ENCODE measurements at regions of chr1 and their contacts with region 1.

Region 1: GRCh38 chr1:51897699-51898031 is 19.1 kb upstream of the NRDC start:
- DNase-seq: no peak
- H3K4me3 ChIP-seq: no peak overlapping the region
- H3K4me3 Mint-ChIP-seq: peak overlapping the region in 1 of 2 donors; percentile 40
- H3K27ac ChIP-seq: no peak overlapping the region
- H3K27ac Mint-ChIP-seq: no peak overlapping the region
- H3K4me1 ChIP-seq: no peaks in the 10 kb centered on the region
- H3K4me1 Mint-ChIP-seq: peaks cover 2% of the 10 kb centered on the region
- H3K27me3 ChIP-seq: peaks cover 9 to 11% of the 10 kb centered on the region in 2 donors
- H3K27me3 Mint-ChIP-seq: peaks cover 28 to 33% (median 30%) of the 10 kb centered on the region in 3 donors
- CTCF ChIP-seq: no peak

Region 2: GRCh38 chr1:51916587-51917405 is 19.1 kb after region 1 on chr1:
- intact Hi-C with region 1: no loop called
- DNase-seq: no peak
- H3K4me3 ChIP-seq: no peak overlapping the region
- H3K4me3 Mint-ChIP-seq: no peak overlapping the region
- H3K27ac ChIP-seq: no peak overlapping the region
- H3K27ac Mint-ChIP-seq: no peak overlapping the region
- H3K4me1 ChIP-seq: no peaks in the 10 kb centered on the region
- H3K4me1 Mint-ChIP-seq: no peaks in the 10 kb centered on the region
- H3K27me3 ChIP-seq: peaks cover 0 to 2% of the 10 kb centered on the region in 2 donors
- H3K27me3 Mint-ChIP-seq: peaks cover 7 to 29% (median 15%) of the 10 kb centered on the region in 3 donors
- CTCF ChIP-seq: no peak

Region 3: DNA sequence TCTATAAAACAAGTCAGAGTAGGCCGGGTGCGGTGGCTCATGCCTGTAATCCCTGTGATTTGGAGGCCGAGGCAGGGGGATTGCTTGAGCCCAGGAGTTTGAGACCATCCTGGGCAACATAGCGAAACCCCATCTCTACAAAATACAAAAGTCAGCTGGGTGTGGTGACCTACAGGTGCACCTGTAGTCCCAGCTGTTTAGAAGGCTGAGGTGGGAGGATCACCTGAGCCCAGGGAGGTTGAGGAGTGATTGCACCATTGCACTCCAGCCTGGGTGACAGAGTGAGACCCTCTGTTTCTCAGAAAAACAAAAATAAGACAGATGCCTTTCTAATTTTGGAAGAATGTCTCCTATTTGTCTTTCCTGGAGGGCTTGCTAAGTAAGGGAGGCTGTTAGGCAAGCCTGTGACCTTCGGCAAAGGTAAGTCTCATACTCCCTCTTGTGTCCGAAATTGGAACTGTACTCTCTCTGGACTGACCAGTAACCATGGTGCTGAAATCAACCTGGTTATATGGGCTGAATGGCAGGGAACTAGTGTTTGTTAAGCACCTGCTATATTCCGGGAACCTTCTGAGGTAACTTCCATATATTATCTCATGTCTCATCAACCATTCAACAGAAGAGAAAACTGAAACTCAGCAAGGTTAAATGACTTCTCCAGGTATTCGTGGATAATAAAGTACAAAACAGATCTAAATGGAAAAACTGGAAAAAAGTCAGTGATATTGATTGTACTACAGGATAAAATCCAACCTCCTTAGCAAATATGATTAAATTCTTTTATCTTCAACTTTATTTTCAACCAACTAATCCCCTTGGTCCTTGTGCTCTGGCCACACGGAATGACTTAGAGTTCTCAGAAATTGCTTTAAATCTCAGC is 104.6 kb after region 1 on chr1:
- intact Hi-C with region 1: loop called in 1 of 2 experiments (anchors 2 kb)
- DNase-seq: peak; percentile 45 to 73 (median 64)
- H3K4me3 ChIP-seq: no peak overlapping the region
- H3K4me3 Mint-ChIP-seq: no peak overlapping the region
- H3K27ac ChIP-seq: no peak overlapping the region
- H3K27ac Mint-ChIP-seq: no peak overlapping the region
- H3K4me1 ChIP-seq: no peaks in the 10 kb centered on the region
- H3K4me1 Mint-ChIP-seq: no peaks in the 10 kb centered on the region
- H3K27me3 ChIP-seq: peaks cover 8 to 9% of the 10 kb centered on the region in 2 donors
- H3K27me3 Mint-ChIP-seq: peaks cover 23 to 27% (median 24%) of the 10 kb centered on the region in 3 donors
- CTCF ChIP-seq: peak; percentile 96

Region 4: GRCh38 chr1:52007215-52008002 is 109.7 kb after region 1 on chr1:
- intact Hi-C with region 1: loop called (anchors 2 to 10 kb)
- DNase-seq: no peak
- H3K4me3 ChIP-seq: no peak overlapping the region
- H3K4me3 Mint-ChIP-seq: peak overlapping the region in 1 of 2 donors; percentile 28
- H3K27ac ChIP-seq: no peak overlapping the region
- H3K27ac Mint-ChIP-seq: no peak overlapping the region
- H3K4me1 ChIP-seq: no peaks in the 10 kb centered on the region
- H3K4me1 Mint-ChIP-seq: no peaks in the 10 kb centered on the region
- H3K27me3 ChIP-seq: peaks cover 8 to 11% of the 10 kb centered on the region in 2 donors
- H3K27me3 Mint-ChIP-seq: peaks cover 27 to 39% (median 30%) of the 10 kb centered on the region in 3 donors
- CTCF ChIP-seq: no peak